Naive thymus-derived CD4-positive, alpha-beta T cell (primary cell): ENCODE measurements at regions of chr2 and their contacts with region 1.

Region 1: GRCh38 chr2:100984892-100985379 is 17.2 kb upstream of the RPL31 start:
- DNase-seq: peak; percentile 55 to 78 (median 72)
- ATAC-seq: peak; percentile 86
- H3K4me3 ChIP-seq: no peak overlapping the region
- H3K4me3 Mint-ChIP-seq: no peak overlapping the region
- H3K27ac ChIP-seq: no peak overlapping the region
- H3K27ac Mint-ChIP-seq: peak overlapping the region in 2 of 9 donors; percentile 6 to 83
- H3K4me1 ChIP-seq: no peaks in the 10 kb centered on the region
- H3K4me1 Mint-ChIP-seq: peaks cover 0 to 6% (median 3%) of the 10 kb centered on the region in 7 donors
- H3K27me3 ChIP-seq: no peaks in the 10 kb centered on the region
- H3K27me3 Mint-ChIP-seq: peaks cover 0 to 2% (median 0%) of the 10 kb centered on the region in 5 donors

Region 2: GRCh38 chr2:100427628-100428258 is 557.2 kb before region 1 on chr2:
- CTCF ChIA-PET with region 1: no interaction called
- POLR2A ChIA-PET with region 1: no interaction called
- intact Hi-C with region 1: loop called (anchors 1 to 2 kb)
- DNase-seq: peak; percentile 39 to 64 (median 60)
- ATAC-seq: peak; percentile 92
- H3K4me3 ChIP-seq: no peak overlapping the region
- H3K4me3 Mint-ChIP-seq: no peak overlapping the region
- H3K27ac ChIP-seq: no peak overlapping the region
- H3K27ac Mint-ChIP-seq: peak overlapping the region in 2 of 9 donors; percentile 48 to 58
- H3K4me1 ChIP-seq: no peaks in the 10 kb centered on the region
- H3K4me1 Mint-ChIP-seq: peaks cover 6 to 12% (median 7%) of the 10 kb centered on the region in 7 donors
- H3K27me3 ChIP-seq: no peaks in the 10 kb centered on the region
- H3K27me3 Mint-ChIP-seq: peaks cover 0 to 42% (median 8%) of the 10 kb centered on the region in 5 donors

Region 3: GRCh38 chr2:100730346-100730745 is 254.6 kb before region 1 on chr2:
- CTCF ChIA-PET with region 1: interaction called, 8 read pairs
- POLR2A ChIA-PET with region 1: no interaction called
- intact Hi-C with region 1: loop called (anchors 1 kb)
- DNase-seq: peak in 8 of 9 donors; percentile 18 to 51 (median 30)
- ATAC-seq: peak; percentile 37
- H3K4me3 ChIP-seq: no peak overlapping the region
- H3K4me3 Mint-ChIP-seq: no peak overlapping the region
- H3K27ac ChIP-seq: no peak overlapping the region
- H3K27ac Mint-ChIP-seq: no peak overlapping the region
- H3K4me1 ChIP-seq: no peaks in the 10 kb centered on the region
- H3K4me1 Mint-ChIP-seq: no peaks in the 10 kb centered on the region
- H3K27me3 ChIP-seq: no peaks in the 10 kb centered on the region
- H3K27me3 Mint-ChIP-seq: peaks cover 7 to 20% (median 11%) of the 10 kb centered on the region in 5 donors

Region 4: DNA sequence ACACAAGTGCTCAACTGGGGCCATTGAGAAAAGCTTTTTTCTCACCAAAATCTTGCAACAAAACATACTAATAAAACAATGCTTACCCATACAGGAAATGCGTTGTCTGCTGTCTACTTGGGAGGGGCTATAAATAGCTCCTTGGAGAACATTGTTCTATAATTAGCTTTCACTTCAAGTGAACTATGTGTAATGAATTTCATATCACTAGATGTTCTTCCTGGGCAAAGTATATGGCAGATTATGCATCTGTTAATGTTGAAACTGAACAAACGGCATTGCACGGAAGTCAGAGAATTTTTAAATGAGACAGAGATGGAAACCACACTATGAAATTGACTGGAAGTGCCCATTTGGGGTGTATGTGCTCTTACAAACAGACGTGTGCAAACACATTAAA is 171.4 kb before region 1 on chr2:
- CTCF ChIA-PET with region 1: no interaction called
- POLR2A ChIA-PET with region 1: no interaction called
- intact Hi-C with region 1: loop called (anchors 5 to 10 kb)
- DNase-seq: peak in 6 of 9 donors; percentile 14 to 53 (median 40)
- ATAC-seq: peak; percentile 52
- H3K4me3 ChIP-seq: no peak overlapping the region
- H3K4me3 Mint-ChIP-seq: peak overlapping the region in 9 of 10 donors; percentile 8 to 74 (median 50)
- H3K27ac ChIP-seq: no peak overlapping the region
- H3K27ac Mint-ChIP-seq: peak overlapping the region in 6 of 9 donors; percentile 9 to 83 (median 54)
- H3K4me1 ChIP-seq: peaks cover 0 to 33% of the 10 kb centered on the region in 2 donors
- H3K4me1 Mint-ChIP-seq: peaks cover 22 to 68% (median 55%) of the 10 kb centered on the region in 7 donors
- H3K27me3 ChIP-seq: no peaks in the 10 kb centered on the region
- H3K27me3 Mint-ChIP-seq: peaks cover 0 to 24% (median 5%) of the 10 kb centered on the region in 5 donors

Region 5: DNA sequence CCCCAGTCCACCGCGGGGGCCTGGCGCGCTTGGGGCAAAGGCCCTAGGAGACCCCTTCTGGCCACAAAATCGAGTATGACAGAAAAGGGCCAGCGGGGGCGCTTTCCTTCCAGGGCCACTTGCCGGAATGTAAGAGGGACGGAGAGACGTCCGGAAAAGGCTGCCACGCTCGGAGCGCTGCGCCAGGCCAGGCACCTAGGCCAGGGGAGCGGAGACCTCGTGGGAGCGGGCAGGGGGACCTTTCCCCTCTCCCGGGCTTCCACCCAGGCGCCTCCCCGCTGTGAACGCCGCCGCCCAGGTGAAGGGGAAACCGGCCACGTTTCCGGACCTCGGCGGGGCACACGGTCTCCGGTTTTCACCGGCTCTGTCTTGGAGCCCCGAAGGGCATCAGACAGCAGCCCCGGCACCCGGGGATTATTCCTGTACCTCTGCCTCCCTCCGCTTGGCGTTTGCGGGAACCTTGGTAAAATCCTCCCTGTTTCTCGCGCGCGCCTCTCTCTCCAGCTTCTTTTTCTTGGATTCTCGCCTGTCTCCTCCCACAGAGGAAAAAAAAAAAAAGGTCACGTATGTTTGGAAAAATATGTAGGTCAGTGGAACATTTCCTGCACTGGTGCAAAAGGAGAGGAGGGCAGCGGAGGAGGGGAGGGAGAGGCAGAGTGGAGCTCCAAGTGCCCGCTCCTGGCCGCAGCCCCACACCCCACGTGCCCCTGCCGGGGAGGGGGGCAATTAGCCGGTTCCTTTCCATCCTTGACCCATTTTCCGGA is 166.1 kb before region 1 on chr2:
- CTCF ChIA-PET with region 1: no interaction called
- POLR2A ChIA-PET with region 1: no interaction called
- intact Hi-C with region 1: loop called (anchors 5 to 10 kb)
- DNase-seq: peak in 6 of 9 donors; percentile 3 to 28 (median 18)
- ATAC-seq: peak; percentile 33
- H3K4me3 ChIP-seq: peak overlapping the region; percentile 48
- H3K4me3 Mint-ChIP-seq: peak overlapping the region; percentile 72 to 91 (median 82)
- H3K27ac ChIP-seq: no peak overlapping the region
- H3K27ac Mint-ChIP-seq: peak overlapping the region in 5 of 9 donors; percentile 29 to 84 (median 36)
- H3K4me1 ChIP-seq: peaks cover 0 to 22% of the 10 kb centered on the region in 2 donors
- H3K4me1 Mint-ChIP-seq: peaks cover 16 to 64% (median 37%) of the 10 kb centered on the region in 7 donors
- H3K27me3 ChIP-seq: no peaks in the 10 kb centered on the region
- H3K27me3 Mint-ChIP-seq: peaks cover 0 to 55% (median 33%) of the 10 kb centered on the region in 5 donors

Region 6: GRCh38 chr2:100924520-100925451 is 60.1 kb before region 1 on chr2:
- CTCF ChIA-PET with region 1: no interaction called
- POLR2A ChIA-PET with region 1: no interaction called
- intact Hi-C with region 1: no loop called
- DNase-seq: peak in 6 of 9 donors; percentile 4 to 41 (median 25)
- ATAC-seq: peak; percentile 78
- H3K4me3 ChIP-seq: peak overlapping the region; percentile 31
- H3K4me3 Mint-ChIP-seq: peak overlapping the region in 9 of 10 donors; percentile 13 to 60 (median 52)
- H3K27ac ChIP-seq: peak overlapping the region; percentile 12
- H3K27ac Mint-ChIP-seq: peak overlapping the region; percentile 63 to 92 (median 89)
- H3K4me1 ChIP-seq: no peaks in the 10 kb centered on the region
- H3K4me1 Mint-ChIP-seq: peaks cover 3 to 18% (median 6%) of the 10 kb centered on the region in 7 donors
- H3K27me3 ChIP-seq: no peaks in the 10 kb centered on the region
- H3K27me3 Mint-ChIP-seq: no peaks in the 10 kb centered on the region

Region 7: DNA sequence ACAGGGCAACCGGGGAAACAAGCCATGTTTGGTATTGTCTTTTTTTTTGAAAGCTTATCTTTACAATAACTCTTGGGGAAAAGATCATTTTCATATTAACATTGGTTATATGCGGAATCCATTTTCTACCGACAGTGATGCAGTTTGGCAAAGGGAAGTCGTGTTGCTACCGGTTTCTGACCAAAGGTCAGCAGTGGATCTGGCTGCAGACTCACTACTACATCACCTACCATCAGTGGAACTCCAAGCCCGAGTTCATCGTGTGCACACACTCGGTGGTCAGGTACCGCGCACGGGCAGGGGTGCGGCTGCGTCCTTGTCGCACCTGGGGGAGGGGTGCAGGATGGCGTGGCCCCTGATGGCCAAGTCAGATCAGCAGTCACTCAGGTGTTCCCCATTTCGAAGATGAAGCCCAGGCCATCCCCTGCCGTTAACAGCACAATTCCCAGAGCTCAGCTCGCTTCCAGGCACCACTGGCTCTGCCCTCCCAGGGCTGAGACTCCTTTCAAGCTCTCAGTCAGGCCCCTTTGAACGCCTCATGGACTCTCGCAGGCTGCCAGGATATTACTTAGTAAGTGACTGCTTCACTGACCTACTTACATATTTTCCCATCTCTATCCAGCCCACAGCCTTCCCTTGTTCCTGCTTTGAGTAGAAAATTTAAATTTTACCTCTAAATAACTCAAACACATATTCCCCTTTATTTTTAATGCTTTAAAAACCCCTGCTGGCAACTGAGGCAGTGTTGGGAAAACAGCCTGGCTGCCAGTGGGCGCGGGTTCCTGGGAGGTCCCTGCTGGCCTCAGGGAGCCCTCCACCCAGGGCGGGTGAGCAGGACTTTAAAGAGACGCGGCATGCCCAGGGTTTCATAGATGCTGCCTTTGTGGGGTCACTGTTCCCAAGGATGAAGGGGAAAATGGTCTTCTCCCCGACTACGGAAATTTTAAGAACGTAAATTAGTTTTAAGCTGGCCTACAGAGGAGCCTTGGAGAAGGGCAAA is 16.5 kb before region 1 on chr2:
- CTCF ChIA-PET with region 1: no interaction called
- POLR2A ChIA-PET with region 1: no interaction called
- intact Hi-C with region 1: no loop called
- DNase-seq: no peak
- ATAC-seq: no peak
- H3K4me3 ChIP-seq: no peak overlapping the region
- H3K4me3 Mint-ChIP-seq: no peak overlapping the region
- H3K27ac ChIP-seq: no peak overlapping the region
- H3K27ac Mint-ChIP-seq: no peak overlapping the region
- H3K4me1 ChIP-seq: no peaks in the 10 kb centered on the region
- H3K4me1 Mint-ChIP-seq: peaks cover 0 to 12% (median 8%) of the 10 kb centered on the region in 7 donors
- H3K27me3 ChIP-seq: no peaks in the 10 kb centered on the region
- H3K27me3 Mint-ChIP-seq: peaks cover 0 to 3% (median 0%) of the 10 kb centered on the region in 5 donors